Calu3 (cell line): ENCODE measurements at regions of chr22 and their contacts with region 1.

Region 1: DNA sequence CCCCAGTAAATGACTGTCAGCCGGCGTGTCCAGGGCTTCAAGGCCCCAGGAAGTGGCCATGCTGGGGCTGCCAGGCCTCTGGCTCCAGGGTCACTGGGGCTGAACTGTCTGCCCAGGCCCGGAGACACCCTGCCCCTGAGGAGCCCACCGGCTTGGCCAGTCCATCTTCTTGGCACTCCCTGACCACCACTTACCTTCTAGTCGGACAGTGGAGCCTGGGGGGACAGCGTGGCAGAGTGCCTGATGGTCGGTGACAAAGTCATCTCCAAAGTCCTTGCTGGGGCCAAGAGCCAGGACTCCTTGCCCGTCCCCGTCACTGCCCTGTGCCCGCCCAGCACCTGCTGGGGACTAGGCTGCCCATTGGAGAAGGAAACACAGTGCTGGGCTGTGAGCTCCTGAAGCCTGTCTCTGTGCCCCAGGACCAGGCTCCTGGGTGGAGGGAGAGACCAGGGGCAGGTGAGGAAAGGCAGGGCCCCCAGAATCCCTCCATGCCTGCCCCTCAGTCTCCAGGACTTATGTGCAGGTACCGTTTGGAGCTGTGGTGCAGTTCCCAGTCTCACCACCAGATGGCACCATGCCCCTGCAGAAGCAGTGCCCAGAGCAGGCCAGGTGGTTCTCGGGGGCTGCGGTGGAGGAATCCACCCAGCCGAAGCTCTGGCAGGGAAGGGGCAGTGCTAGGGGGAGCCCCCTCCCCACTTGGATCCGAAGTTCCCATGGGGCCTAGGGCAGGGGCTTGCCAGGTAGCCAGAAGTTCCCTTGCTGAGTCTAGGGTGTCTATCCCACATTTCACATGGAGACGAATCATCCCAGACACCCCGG is 6.0 kb upstream of the CCDC188 start:
- DNase-seq: peak; percentile 90
- H3K4me3 Mint-ChIP-seq: no peak overlapping the region
- H3K27ac Mint-ChIP-seq: no peak overlapping the region
- H3K4me1 Mint-ChIP-seq: no peaks in the 10 kb centered on the region
- H3K27me3 Mint-ChIP-seq: peaks cover 64% of the 10 kb centered on the region
- CTCF ChIP-seq: peak; percentile 99

Region 2: GRCh38 chr22:20256551-20257211 is 99.9 kb after region 1 on chr22:
- CTCF ChIA-PET with region 1: no interaction called
- intact Hi-C with region 1: no loop called
- DNase-seq: no peak
- H3K4me3 Mint-ChIP-seq: no peak overlapping the region
- H3K27ac Mint-ChIP-seq: no peak overlapping the region
- H3K4me1 Mint-ChIP-seq: no peaks in the 10 kb centered on the region
- H3K27me3 Mint-ChIP-seq: no peaks in the 10 kb centered on the region
- CTCF ChIP-seq: no peak

Region 3: GRCh38 chr22:20284471-20285086 is 127.8 kb after region 1 on chr22:
- CTCF ChIA-PET with region 1: interaction called, 11 read pairs
- intact Hi-C with region 1: no loop called
- DNase-seq: no peak
- H3K4me3 Mint-ChIP-seq: no peak overlapping the region
- H3K27ac Mint-ChIP-seq: no peak overlapping the region
- H3K4me1 Mint-ChIP-seq: peaks cover 5% of the 10 kb centered on the region
- H3K27me3 Mint-ChIP-seq: peaks cover 86% of the 10 kb centered on the region
- CTCF ChIP-seq: no peak